ENCODE measurements at regions of chr7 and their contacts with region 1.

Region 1: GRCh38 chr7:74173866-74174605 is at the start of gene EIF4H:
- DNase-seq: peak; percentile 96
- H3K4me3 Mint-ChIP-seq: peak within 1 kb of the TSS; percentile 88
- H3K27ac Mint-ChIP-seq: peak within 1 kb of the TSS; percentile 89
- H3K4me1 Mint-ChIP-seq: peaks cover 39% of the 10 kb centered on the region
- H3K27me3 Mint-ChIP-seq: no peaks in the 10 kb centered on the region
- total RNA-seq, gene EIF4H: 400 to 410 TPM

Region 2: DNA sequence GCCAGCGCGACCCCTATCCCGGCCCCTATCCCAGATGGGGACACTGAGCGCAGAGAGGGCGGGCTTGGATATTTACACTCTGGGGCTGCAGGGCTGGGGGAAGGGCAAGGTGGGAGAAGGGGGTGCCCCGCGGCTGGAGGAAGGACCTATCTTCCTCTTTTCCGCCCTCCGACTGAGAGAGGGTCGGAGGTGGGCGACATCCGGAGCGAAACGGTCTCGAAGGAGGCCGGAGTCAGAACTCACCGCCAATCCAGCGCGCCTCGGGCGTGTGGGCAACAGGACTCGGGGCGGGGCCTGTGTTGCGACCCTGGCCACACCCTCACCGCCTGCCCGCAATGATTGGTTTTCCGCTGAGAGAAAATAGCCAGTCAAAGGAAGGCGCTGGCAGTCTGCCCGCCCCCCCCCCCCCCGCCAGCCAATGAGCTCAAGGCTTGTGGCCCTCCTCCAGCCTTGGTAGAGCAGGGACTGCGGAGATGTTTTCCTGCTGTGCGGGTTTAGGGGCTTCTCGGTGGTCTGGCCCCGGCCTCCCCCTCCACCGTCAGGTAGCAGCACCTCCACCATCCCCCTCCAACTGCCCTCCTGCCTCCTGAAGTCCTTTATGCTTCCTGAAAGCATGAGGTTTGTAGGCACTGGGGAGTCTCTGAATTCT is 331.7 kb before region 1 on chr7 and contains the start of gene METTL27:
- CTCF ChIA-PET with region 1: no interaction called
- POLR2A ChIA-PET with region 1: no interaction called
- intact Hi-C with region 1: loop called (anchors 10 kb)
- DNase-seq: peak; percentile 96
- H3K4me3 Mint-ChIP-seq: peak within 1 kb of the TSS; percentile 77
- H3K27ac Mint-ChIP-seq: no peak within 1 kb of the TSS
- H3K4me1 Mint-ChIP-seq: no peaks in the 10 kb centered on the region
- H3K27me3 Mint-ChIP-seq: no peaks in the 10 kb centered on the region
- total RNA-seq, gene METTL27: 1.7 to 2.3 TPM

Region 3: DNA sequence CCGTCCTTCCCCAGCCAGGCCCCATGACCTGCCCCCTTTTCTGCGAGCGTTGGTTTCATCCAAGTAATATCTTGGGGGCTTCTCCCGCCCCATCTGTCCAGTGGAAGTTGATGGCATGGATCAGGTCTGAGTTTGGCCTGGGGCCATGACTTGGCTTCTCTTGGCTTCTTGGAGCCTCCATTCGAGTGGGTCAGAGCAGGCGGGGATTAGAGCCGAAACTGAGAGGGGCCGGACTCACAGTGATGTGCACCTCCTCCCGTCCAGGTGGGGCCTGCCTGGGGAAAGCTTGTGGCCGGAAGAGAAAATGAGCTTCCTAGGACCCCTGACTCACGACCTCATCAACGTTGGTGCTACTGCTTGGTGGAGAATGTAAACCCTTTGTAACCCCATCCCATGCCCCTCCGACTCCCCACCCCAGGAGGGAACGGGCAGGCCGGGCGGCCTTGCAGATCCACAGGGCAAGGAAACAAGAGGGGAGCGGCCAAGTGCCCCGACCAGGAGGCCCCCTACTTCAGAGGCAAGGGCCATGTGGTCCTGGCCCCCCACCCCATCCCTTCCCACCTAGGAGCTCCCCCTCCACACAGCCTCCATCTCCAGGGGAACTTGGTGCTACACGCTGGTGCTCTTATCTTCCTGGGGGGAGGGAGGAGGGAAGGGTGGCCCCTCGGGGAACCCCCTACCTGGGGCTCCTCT is 105.5 kb before region 1 on chr7:
- CTCF ChIA-PET with region 1: interaction called, 7 read pairs
- POLR2A ChIA-PET with region 1: interaction called, 3 read pairs
- intact Hi-C with region 1: loop called (anchors 2 kb)
- DNase-seq: no peak
- H3K4me3 Mint-ChIP-seq: no peak overlapping the region
- H3K27ac Mint-ChIP-seq: no peak overlapping the region
- H3K4me1 Mint-ChIP-seq: no peaks in the 10 kb centered on the region
- H3K27me3 Mint-ChIP-seq: no peaks in the 10 kb centered on the region

Region 4: GRCh38 chr7:74083117-74083876 is 90.7 kb before region 1 on chr7 and contains the start of gene LIMK1:
- CTCF ChIA-PET with region 1: no interaction called
- POLR2A ChIA-PET with region 1: interaction called, 7 read pairs
- intact Hi-C with region 1: loop called (anchors 5 kb)
- DNase-seq: peak; percentile 89
- H3K4me3 Mint-ChIP-seq: peak within 1 kb of the TSS; percentile 83
- H3K27ac Mint-ChIP-seq: peak within 1 kb of the TSS; percentile 65
- H3K4me1 Mint-ChIP-seq: peaks cover 7% of the 10 kb centered on the region
- H3K27me3 Mint-ChIP-seq: no peaks in the 10 kb centered on the region
- total RNA-seq, gene LIMK1: 16.4 to 16.9 TPM

Region 5: DNA sequence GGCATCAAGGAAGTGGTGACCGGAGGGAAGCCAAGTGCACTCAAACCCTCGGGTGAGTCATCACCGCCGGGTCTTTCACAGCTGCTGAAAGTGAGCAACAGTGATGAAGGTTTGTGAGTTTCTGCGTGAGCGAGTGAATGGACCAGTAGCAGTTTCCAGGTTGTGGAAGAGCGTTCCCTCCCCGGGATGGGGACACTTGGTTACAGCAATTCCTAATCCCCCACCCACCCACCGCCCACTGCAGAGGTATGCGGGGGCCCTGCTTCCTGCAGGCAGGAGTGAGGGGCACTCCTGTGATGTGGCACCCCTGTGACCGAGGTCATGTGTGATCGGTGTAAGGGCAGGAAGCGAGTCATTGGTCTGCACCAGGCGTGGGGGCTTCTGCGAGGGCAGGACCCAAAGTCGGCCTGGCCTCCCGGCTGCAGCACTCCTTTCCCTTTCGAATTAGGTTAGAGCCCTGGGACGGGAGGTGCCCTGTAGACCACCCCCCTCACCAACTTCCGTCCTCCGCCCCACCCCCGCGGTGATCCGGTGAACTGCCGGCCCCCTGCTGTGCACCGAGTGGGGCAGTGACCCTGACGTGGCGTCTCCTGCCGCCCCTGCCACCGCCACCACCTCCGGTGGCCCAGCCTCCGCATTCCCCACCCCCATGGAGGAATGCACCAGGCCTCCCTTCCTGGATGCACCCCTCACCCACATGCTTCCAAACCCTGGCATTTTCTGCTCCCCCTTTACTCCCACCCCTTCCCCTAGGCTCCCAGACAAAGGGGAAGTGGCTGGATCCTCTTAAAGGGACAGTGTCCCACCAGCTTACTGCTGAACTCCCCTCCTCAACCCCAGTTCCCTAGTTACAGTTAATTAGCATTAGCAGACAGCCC is 79.6 kb before region 1 on chr7:
- CTCF ChIA-PET with region 1: no interaction called
- POLR2A ChIA-PET with region 1: interaction called, 4 read pairs
- intact Hi-C with region 1: loop called (anchors 1 kb)
- DNase-seq: peak; percentile 91
- H3K4me3 Mint-ChIP-seq: peak overlapping the region; percentile 73
- H3K27ac Mint-ChIP-seq: peak overlapping the region; percentile 82
- H3K4me1 Mint-ChIP-seq: peaks cover 17% of the 10 kb centered on the region
- H3K27me3 Mint-ChIP-seq: no peaks in the 10 kb centered on the region

Region 6: GRCh38 chr7:74449809-74450397 is 275.9 kb after region 1 on chr7:
- CTCF ChIA-PET with region 1: no interaction called
- POLR2A ChIA-PET with region 1: no interaction called
- intact Hi-C with region 1: loop called (anchors 2 kb)
- DNase-seq: peak; percentile 75
- H3K4me3 Mint-ChIP-seq: no peak overlapping the region
- H3K27ac Mint-ChIP-seq: peak overlapping the region; percentile 46
- H3K4me1 Mint-ChIP-seq: peaks cover 14% of the 10 kb centered on the region
- H3K27me3 Mint-ChIP-seq: no peaks in the 10 kb centered on the region